Posterior vena cava (tissue), 2 donors: ENCODE measurements at regions of chr6 and their contacts with region 1.

Region 1: GRCh38 chr6:169183233-169183632 is 70.4 kb downstream of the THBS2 start:
- DNase-seq: no peak

Region 2: GRCh38 chr6:169160855-169161560 is 22.2 kb before region 1 on chr6:
- intact Hi-C with region 1: loop called in 1 of 2 experiments (anchors 1 kb)
- DNase-seq: peak; percentile 80

Region 3: DNA sequence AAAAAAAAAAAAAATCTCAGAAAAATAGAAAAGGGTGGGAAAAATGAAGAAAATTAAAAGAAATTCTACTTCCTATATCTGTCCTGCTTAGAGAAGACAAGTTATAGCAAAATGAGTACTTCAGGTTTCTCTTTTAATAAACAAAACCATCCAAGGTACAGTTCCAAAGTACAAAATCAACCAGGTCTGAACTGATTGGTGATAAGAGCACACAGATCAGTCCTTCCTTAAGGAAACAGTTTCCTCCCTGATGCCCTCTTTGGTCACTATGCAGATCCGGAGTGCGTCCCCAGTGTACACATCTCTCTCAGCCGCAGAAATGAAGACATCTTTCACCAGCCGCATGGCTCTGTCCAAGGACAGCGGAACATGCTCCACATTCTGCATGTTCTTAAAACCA is 1351.8 kb after region 1 on chr6:
- intact Hi-C with region 1: loop called in 1 of 2 experiments (anchors 5 kb)
- DNase-seq: no peak